ENCODE measurements at regions of chr6 and their contacts with region 1.

Region 1: GRCh38 chr6:117449549-117450439 is 24.1 kb upstream of the ROS1 start:
- H3K4me3 ChIP-seq: no peak overlapping the region; the same call in 1 of the 2 replicates
- H3K27ac ChIP-seq: no peak overlapping the region
- H3K4me1 ChIP-seq: no peaks in the 10 kb centered on the region; the same call in 1 of the 2 replicates
- CTCF ChIP-seq: peak; percentile 43; the same call in 1 of the 2 replicates

Region 2: GRCh38 chr6:116570856-116571682 is 878.7 kb before region 1 on chr6 and contains the start of gene RWDD1:
- CTCF ChIA-PET with region 1: no interaction called
- POLR2A ChIA-PET with region 1: no interaction called
- H3K4me3 ChIP-seq: peak within 1 kb of the TSS; percentile 96
- H3K27ac ChIP-seq: peak within 1 kb of the TSS; percentile 85
- H3K4me1 ChIP-seq: peaks cover 2% of the 10 kb centered on the region; the same call in 1 of the 2 replicates
- CTCF ChIP-seq: peak; percentile 40; the same call in 1 of the 2 replicates

Region 3: DNA sequence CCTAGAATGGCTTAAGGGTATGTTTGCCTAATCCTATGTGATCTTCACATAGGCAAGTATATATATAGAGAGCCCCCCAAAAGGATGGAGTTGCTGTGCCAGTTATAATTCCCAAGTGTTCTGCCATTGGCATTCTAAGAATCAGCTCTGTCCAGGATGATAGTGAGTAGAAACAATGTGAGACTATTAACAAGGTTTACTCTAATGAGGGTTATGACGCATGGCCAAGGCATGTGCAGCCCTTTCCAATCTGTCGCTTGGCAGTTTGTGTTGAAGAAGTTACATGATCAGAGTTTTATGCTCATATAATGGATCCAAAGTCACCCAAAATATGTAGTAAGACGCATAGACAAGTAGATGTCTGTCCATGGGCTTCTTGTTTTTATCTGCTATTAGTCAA is 150.9 kb before region 1 on chr6:
- CTCF ChIA-PET with region 1: no interaction called
- POLR2A ChIA-PET with region 1: no interaction called
- H3K4me3 ChIP-seq: no peak overlapping the region
- H3K27ac ChIP-seq: no peak overlapping the region
- H3K4me1 ChIP-seq: no peaks in the 10 kb centered on the region
- CTCF ChIP-seq: no peak

Region 4: DNA sequence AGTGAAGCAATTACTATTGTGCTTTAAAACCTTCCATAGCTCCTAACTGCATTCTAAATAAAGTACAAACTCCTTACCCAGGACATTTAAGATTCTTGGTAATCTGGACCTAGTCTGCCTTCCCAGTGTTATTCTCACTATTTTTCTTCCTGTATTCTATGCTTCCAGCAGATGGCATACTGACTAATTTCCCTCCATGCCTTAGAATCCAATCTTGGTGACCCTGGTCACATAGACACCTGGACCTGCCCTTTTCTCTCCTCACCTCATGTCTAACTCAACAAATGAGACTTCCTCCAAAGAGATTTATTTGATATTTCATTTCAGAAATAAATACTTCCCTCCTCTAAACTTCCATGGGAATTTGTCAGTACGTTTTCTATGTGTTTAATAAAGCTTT is 49.9 kb before region 1 on chr6:
- CTCF ChIA-PET with region 1: interaction called, 18 read pairs
- POLR2A ChIA-PET with region 1: no interaction called
- H3K4me3 ChIP-seq: no peak overlapping the region
- H3K27ac ChIP-seq: no peak overlapping the region
- H3K4me1 ChIP-seq: no peaks in the 10 kb centered on the region
- CTCF ChIP-seq: peak; percentile 36; the same call in 1 of the 2 replicates

Region 5: DNA sequence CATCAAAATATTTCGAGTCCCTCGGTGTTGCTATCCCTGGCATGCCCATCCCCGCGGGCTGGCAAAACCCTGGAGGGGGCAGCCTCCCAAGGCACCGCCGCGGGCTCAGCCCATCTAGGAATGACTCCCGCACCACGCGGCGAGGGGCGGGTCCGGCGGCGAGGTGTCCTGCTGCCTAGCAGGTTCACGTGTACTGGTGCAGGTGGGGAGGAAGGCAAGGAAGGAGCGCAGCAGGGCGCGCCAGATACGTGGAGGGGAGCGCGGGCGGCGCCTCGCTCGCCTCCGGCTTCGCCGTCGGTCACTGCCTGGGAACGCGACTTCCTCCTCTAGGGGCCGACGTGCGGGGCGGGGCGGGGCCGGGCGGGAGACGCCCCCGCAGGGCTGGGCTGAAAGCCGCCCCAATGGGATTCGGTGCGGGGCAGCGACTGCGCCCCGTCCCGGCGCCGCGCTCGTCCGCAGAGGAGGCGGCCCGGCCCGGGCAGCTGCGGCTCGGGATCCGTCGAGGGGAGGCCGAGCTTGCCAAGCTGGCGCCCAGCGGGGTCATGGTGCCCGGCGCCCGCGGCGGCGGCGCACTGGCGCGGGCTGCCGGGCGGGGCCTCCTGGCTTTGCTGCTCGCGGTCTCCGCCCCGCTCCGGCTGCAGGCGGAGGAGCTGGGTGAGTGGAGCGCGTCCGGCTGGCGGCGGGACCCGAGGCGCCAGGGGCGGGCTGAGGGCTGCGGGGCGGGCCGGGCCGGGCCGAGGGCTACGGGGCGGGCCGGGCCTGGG is 32.6 kb after region 1 on chr6 and contains the start of gene DCBLD1:
- CTCF ChIA-PET with region 1: interaction called, 34 read pairs
- POLR2A ChIA-PET with region 1: interaction called, 6 read pairs
- H3K4me3 ChIP-seq: peak within 1 kb of the TSS; percentile 85
- H3K27ac ChIP-seq: peak within 1 kb of the TSS; percentile 73
- H3K4me1 ChIP-seq: no peaks in the 10 kb centered on the region
- CTCF ChIP-seq: peak; percentile 60

Region 6: DNA sequence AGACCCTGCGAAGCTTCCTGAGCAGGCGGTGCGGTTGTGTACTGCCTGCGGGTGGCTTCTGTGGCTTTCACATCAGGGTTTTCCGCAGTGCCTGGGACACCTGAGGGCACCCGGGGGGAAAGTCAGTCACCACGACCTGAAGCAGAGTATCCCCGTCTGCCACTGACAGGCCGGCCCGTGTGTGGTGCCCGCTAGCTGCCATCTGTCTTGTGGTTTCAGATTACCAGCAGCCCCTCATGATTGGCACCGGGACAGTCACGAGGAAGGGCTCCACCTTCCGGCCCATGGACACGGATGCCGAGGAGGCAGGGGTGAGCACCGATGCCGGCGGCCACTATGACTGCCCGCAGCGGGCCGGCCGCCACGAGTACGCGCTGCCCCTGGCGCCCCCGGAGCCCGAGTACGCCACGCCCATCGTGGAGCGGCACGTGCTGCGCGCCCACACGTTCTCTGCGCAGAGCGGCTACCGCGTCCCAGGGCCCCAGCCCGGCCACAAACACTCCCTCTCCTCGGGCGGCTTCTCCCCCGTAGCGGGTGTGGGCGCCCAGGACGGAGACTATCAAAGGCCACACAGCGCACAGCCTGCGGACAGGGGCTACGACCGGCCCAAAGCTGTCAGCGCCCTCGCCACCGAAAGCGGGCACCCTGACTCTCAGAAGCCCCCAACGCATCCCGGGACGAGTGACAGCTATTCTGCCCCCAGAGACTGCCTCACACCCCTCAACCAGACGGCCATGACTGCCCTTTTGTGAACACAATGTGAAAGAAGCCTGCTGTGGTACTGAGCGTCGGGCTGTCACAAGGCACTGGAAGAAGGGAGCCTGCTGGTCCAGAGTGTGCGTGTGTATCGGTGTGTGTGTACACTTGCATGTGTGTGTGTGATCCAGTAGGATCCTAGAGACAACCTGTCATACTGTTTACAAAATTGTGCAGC is 98.2 kb after region 1 on chr6:
- CTCF ChIA-PET with region 1: interaction called, 45 read pairs
- POLR2A ChIA-PET with region 1: no interaction called
- H3K4me3 ChIP-seq: no peak overlapping the region
- H3K27ac ChIP-seq: no peak overlapping the region
- H3K4me1 ChIP-seq: peaks cover 4% of the 10 kb centered on the region; the same call in 1 of the 2 replicates
- CTCF ChIP-seq: no peak

Region 7: DNA sequence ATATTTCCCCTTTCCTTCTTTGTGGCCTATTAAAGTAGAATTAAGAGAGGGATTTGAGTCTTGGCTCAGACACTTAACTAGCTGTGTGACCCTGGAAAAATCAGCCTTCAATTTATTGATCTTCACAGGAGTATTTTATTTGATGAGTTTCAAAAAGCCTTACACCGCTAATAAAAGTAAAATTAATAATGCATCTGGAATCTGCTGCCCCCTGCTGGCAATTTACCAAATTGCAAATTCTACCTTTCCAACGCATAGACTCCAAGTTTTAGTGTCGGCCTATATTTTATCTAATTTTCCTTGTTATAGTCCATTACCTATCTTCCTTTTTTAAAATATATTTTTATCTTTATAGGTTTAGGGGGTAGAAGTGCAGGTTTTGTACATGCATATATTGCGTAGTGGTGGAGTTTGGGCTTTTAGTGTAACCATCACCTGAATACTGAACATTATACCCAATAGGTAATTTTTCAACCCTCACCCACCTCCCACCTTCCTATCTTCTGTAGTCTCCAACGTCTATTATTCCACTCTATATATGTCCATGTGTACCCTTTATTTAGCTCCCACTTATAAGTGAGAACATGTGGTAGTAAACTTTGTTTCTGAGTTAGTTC is 106.2 kb after region 1 on chr6:
- CTCF ChIA-PET with region 1: interaction called, 118 read pairs
- POLR2A ChIA-PET with region 1: interaction called, 4 read pairs
- H3K4me3 ChIP-seq: no peak overlapping the region
- H3K27ac ChIP-seq: no peak overlapping the region
- H3K4me1 ChIP-seq: no peaks in the 10 kb centered on the region
- CTCF ChIP-seq: no peak

Region 8: DNA sequence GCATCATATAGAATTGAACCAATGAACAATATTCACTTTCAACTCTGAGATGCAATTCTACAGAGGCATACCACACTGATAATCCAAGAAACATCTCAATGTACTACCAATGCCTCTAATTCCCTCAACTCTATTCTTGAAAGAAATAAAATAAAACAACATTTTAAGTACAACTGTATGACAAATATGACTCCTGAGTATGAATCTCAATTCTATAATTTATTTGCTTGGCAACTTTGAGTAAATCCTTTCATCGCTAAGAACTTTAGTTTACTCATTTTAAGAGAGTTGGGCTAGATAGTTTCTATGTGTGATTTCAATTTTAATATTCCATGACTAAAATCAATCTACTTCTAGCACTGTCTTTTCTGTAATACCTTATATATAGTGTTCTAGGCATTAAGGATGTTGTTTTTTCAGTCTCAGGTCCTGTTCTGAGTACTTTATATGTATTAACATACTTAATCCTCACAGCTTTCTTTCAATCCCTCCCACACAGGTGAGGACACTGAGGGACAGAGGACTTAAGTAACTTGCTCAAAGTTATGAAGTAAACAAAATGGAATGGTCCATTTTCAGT is 119.1 kb after region 1 on chr6:
- CTCF ChIA-PET with region 1: interaction called, 14 read pairs
- POLR2A ChIA-PET with region 1: interaction called, 3 read pairs
- H3K4me3 ChIP-seq: no peak overlapping the region
- H3K27ac ChIP-seq: no peak overlapping the region
- H3K4me1 ChIP-seq: no peaks in the 10 kb centered on the region
- CTCF ChIP-seq: no peak

Region 9: GRCh38 chr6:117607511-117607910 is 157.7 kb after region 1 on chr6:
- CTCF ChIA-PET with region 1: interaction called, 106 read pairs
- POLR2A ChIA-PET with region 1: interaction called, 15 read pairs
- H3K4me3 ChIP-seq: no peak overlapping the region
- H3K27ac ChIP-seq: no peak overlapping the region
- H3K4me1 ChIP-seq: no peaks in the 10 kb centered on the region
- CTCF ChIP-seq: no peak

Measured in HEK293 (cell line).